ENCODE measurements at regions of chr11 and their contacts with region 1.

Region 1: GRCh38 chr11:76919887-76920746 is 59.4 kb downstream of the ACER3 start:
- DNase-seq: peak; percentile 76 to 90 (median 85)
- H3K4me3 ChIP-seq: no peak overlapping the region
- H3K27ac ChIP-seq: no peak overlapping the region
- H3K4me1 ChIP-seq: peaks cover 0 to 12% of the 10 kb centered on the region in 2 donors
- H3K27me3 ChIP-seq: no peaks in the 10 kb centered on the region
- CTCF ChIP-seq: peak; percentile 85 to 95 (median 88)
- POLR2A ChIP-seq: no peak

Region 2: DNA sequence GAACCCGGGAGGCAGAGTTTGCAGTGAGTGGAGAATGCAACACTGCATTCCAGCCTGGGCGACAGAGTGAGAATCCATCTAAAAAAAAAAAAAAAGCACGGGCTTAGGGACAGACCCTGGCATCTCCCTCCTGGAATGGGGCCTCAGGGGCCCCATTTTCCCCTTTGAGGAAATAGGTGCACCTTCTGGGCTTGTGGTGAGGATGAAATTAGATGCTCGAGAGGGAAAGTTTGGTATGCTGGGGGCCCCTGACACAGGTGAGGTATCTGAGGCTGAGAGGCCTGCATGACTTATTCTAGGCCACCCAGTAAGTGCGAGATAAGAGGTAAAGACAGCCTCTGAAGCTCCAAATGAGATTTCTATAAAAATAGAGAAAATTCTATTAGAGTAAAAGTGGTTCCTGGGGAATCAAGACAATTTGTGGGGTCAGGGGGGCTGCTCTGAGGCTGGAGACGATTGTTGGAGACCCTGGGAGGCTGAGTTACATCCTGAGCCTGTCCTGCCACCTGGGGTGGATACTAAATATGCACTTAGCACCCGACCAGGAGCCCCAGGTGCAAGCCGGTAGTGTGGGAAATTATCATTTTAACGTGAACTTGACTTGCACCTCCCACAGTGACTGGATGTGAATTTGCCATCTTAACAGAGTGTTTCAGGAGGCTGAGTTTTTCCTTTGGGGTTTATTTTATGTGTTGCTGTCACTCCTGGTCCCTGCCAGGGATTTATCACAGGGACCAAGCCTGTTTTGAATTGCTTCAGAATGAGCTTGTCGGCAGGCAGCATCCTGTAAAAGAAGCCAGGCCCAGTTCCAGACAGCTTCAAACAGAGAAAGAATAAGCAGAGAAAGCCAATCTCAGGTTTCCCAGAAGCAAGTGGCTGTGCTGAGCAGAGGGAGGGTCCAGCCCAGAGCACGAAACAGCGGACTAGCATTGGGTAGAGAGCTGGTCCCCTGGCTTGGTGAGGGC is 185.4 kb before region 1 on chr11:
- intact Hi-C with region 1: loop called in 1 of 2 experiments (anchors 5 kb)
- DNase-seq: no peak
- H3K4me3 ChIP-seq: no peak overlapping the region
- H3K27ac ChIP-seq: no peak overlapping the region
- H3K4me1 ChIP-seq: no peaks in the 10 kb centered on the region
- H3K27me3 ChIP-seq: no peaks in the 10 kb centered on the region
- CTCF ChIP-seq: no peak
- POLR2A ChIP-seq: no peak

Region 3: DNA sequence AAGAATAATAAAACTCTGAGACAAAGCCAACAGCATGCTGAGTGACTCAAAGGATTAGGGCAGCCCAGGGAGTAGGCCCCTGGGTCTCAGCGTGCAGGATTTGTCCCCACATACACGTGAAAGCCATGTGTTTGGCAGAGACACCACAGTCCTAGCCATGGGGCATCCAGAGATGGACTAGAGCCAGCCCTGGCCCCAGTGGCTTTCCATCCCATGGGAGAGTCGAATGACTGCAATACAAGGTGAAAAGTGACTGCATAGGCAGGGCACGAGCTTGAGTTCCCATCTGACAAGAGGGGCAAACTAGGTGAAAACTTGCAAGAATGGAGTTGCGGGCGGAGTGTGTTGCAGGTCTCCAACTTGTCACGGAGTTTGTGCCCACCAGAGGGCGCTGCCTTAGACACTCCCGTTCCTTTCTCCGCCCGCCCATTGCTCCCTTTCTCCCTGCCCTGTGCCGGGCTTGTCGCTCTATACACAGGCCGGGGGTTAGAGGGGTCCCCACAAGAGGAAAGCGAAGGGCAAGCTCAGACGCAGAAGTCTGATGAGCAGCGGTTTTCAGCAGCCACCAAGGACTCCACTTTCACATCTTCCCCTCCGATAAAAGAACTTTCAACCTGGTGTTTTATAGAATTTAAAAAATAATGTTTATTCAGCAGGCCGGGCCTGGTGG is 112.8 kb before region 1 on chr11:
- intact Hi-C with region 1: loop called (anchors 5 kb)
- DNase-seq: peak; percentile 79 to 94 (median 89)
- H3K4me3 ChIP-seq: no peak overlapping the region
- H3K27ac ChIP-seq: peak overlapping the region in 1 of 5 donors; percentile 0
- H3K4me1 ChIP-seq: peaks cover 0 to 4% of the 10 kb centered on the region in 2 donors
- H3K27me3 ChIP-seq: no peaks in the 10 kb centered on the region
- CTCF ChIP-seq: peak; percentile 64 to 85 (median 76)
- POLR2A ChIP-seq: no peak

Region 4: DNA sequence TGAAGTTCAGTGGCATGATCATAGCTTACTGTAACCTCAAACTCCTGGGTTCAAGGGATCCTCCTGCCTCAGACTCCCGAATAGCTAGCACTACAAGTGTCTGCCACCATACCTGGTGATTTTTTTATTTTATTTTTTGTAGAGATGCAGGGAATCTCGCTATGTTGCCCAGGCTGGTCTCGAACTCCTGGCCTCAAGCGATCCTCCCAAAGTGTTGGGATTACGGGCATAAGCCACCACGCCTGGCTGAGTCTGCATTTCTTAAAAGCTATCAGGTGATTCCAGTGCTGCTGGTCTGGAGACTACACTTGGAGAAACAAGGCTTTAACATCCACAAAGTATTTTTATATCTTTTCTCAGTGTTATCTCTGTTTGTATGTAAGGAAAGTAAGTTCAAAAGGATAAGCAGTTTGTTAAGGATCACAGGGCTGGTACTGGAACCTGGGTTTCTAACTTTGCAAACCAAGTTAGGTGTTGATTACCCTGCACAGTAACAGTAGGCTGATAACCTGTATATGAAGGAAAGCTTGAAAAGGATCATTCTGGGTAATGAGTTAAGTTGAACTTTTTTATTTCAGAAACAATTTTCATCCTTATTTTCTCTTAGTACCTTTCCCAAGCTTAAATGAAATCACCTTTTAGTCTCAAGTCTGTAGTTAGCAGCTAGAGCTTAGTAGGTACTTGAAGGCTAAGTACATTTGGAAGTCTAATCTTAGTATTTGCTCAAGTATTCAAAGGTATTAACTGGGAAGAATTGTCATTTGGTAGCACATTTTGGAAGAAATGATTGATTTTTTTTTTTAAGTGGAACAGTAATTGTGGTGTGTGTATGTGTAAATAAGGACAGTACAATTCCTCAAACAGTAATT is 46.9 kb before region 1 on chr11:
- intact Hi-C with region 1: no loop called
- DNase-seq: no peak
- H3K4me3 ChIP-seq: no peak overlapping the region
- H3K27ac ChIP-seq: no peak overlapping the region
- H3K4me1 ChIP-seq: no peaks in the 10 kb centered on the region
- H3K27me3 ChIP-seq: no peaks in the 10 kb centered on the region
- CTCF ChIP-seq: no peak
- POLR2A ChIP-seq: no peak

Region 5: DNA sequence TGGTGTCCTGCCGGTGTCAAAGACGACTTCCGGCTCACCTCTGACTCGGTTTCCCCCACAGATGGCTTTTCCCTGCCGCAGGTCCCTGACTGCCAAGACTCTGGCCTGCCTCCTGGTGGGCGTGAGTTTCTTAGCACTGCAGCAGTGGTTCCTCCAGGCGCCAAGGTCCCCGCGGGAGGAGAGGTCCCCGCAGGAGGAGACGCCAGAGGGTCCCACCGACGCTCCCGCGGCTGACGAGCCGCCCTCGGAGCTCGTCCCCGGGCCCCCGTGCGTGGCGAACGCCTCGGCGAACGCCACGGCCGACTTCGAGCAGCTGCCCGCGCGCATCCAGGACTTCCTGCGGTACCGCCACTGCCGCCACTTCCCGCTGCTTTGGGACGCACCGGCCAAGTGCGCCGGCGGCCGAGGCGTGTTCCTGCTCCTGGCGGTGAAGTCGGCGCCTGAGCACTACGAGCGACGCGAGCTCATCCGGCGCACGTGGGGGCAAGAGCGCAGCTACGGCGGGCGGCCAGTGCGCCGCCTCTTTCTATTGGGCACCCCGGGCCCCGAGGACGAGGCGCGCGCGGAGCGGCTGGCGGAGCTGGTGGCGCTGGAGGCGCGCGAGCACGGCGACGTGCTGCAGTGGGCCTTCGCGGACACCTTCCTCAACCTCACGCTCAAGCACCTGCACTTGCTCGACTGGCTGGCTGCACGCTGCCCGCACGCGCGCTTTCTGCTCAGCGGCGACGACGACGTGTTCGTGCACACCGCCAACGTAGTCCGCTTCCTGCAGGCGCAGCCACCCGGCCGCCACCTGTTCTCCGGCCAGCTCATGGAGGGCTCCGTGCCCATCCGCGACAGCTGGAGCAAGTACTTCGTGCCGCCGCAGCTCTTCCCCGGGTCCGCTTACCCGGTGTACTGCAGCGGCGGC is 119.6 kb after region 1 on chr11:
- intact Hi-C with region 1: loop called in 1 of 2 experiments (anchors 2 kb)
- DNase-seq: peak in 4 of 7 donors; percentile 32 to 55 (median 42)
- H3K4me3 ChIP-seq: peak overlapping the region in 1 of 4 donors; percentile 45
- H3K27ac ChIP-seq: no peak overlapping the region
- H3K4me1 ChIP-seq: peaks cover 0 to 10% of the 10 kb centered on the region in 2 donors
- H3K27me3 ChIP-seq: peaks cover 28% of the 10 kb centered on the region
- CTCF ChIP-seq: peak in 5 of 6 experiments; percentile 18 to 45 (median 42)
- POLR2A ChIP-seq: no peak

Region 6: DNA sequence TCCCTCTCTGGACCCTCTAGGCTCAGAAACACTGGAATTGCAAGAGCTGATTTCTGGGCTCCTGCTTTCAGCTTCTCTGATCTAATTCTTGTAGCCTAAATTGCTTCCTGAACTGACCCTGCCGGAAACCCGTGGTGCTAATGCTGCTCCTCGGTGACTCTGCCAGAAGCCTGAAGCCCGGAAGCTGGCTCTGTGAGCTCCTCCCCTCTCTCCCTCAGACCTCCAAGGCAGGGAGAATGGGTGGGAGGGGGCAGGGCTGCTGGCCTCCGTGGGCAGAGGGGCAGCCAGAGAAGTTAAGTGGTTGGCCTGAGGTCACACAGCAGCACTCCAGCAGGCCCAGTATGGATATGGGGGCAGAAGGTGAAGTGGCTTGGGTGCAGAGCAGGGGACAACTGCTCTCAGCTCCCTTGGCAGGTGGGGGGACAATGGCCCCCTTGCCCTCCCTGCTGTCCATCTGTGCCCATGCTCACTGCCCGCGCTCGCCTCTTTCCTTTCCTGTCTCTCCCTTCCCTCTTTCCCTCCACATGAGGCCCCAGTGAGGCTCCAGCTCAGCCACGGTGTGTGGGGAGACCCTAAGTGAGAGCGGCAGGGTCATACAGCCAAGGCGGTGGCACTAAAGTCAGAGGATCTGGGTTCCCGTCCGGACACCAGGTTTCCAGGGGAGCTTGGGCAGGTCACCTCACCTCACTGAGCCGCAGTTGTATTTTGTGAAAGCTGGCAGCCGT is 162.9 kb after region 1 on chr11:
- intact Hi-C with region 1: no loop called
- DNase-seq: peak; percentile 13 to 89 (median 73)
- H3K4me3 ChIP-seq: no peak overlapping the region
- H3K27ac ChIP-seq: peak overlapping the region in 4 of 5 donors; percentile 18 to 95 (median 60)
- H3K4me1 ChIP-seq: peaks cover 21 to 33% of the 10 kb centered on the region in 2 donors
- H3K27me3 ChIP-seq: no peaks in the 10 kb centered on the region
- CTCF ChIP-seq: no peak
- POLR2A ChIP-seq: no peak

Region 7: GRCh38 chr11:77340501-77340900 is 420.4 kb after region 1 on chr11:
- intact Hi-C with region 1: no loop called
- DNase-seq: no peak
- H3K4me3 ChIP-seq: no peak overlapping the region
- H3K27ac ChIP-seq: no peak overlapping the region
- H3K4me1 ChIP-seq: no peaks in the 10 kb centered on the region
- H3K27me3 ChIP-seq: no peaks in the 10 kb centered on the region
- CTCF ChIP-seq: no peak
- POLR2A ChIP-seq: no peak